MCF 10A (cell line): ENCODE measurements at regions of chr4 and their contacts with region 1.

Region 1: DNA sequence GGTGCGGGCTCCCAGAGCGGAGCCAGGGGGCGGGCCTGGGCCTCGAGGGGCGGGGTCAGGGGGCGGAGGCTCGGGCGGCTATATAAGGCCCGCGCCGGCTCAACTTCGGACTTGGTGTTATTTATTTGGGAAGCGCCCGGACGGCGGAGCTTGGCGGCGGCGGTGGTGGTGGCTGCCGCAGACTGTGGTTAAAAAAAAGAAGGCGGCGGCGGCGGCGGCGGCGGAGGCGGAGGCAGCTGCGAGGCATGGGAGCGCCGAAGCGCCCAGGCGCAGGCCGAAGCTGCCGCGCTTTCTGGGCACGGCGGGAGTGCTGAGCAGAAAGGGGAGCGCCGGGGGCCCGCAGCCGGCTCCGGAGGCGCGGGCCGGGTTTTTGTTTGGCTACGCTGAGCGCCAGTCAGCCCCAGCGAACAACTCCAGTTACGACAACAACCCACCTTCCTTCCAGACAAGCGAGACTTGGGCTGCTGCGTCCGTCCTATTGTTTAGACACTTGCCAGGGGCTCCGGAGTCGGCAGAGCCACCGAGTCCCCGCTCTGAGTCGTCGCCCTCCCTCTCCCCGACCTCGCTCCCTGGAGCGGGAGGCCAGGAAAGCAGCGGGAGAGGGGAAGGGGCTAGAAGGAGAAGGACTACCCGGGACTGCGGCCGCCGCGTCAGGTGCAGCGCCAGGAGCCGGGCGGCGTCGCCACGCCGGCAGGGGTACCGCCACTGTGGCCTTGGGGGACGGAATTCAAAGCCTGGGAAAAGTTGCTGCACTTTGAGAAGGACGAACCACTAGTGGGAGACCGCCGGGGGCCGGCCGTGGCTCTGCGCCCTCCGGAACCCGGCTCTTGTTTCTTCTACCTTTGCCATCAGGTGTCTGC is at the start of gene SLIT2:
- DNase-seq: peak; percentile 84
- H3K4me3 Mint-ChIP-seq: peak within 1 kb of the TSS; percentile 91
- H3K27ac Mint-ChIP-seq: peak within 1 kb of the TSS; percentile 63
- H3K4me1 Mint-ChIP-seq: peaks cover 29% of the 10 kb centered on the region
- H3K27me3 Mint-ChIP-seq: no peaks in the 10 kb centered on the region
- CTCF ChIP-seq: no peak
- total RNA-seq, gene SLIT2: 8.4 and 10.2 TPM in 2 replicates

Region 2: GRCh38 chr4:18689308-18690115 is 1562.5 kb before region 1 on chr4:
- CTCF ChIA-PET with region 1: interaction called, 5 read pairs
- POLR2A ChIA-PET with region 1: no interaction called
- intact Hi-C with region 1: loop called (anchors 2 kb)
- DNase-seq: peak; percentile 73
- H3K4me3 Mint-ChIP-seq: no peak overlapping the region
- H3K27ac Mint-ChIP-seq: no peak overlapping the region
- H3K4me1 Mint-ChIP-seq: peaks cover 10% of the 10 kb centered on the region
- H3K27me3 Mint-ChIP-seq: no peaks in the 10 kb centered on the region
- CTCF ChIP-seq: peak; percentile 80

Region 3: GRCh38 chr4:19300213-19300612 is 951.8 kb before region 1 on chr4:
- CTCF ChIA-PET with region 1: interaction called, 11 read pairs
- POLR2A ChIA-PET with region 1: no interaction called
- intact Hi-C with region 1: no loop called
- DNase-seq: no peak
- H3K4me3 Mint-ChIP-seq: no peak overlapping the region
- H3K27ac Mint-ChIP-seq: no peak overlapping the region
- H3K4me1 Mint-ChIP-seq: peaks cover 5% of the 10 kb centered on the region
- H3K27me3 Mint-ChIP-seq: no peaks in the 10 kb centered on the region
- CTCF ChIP-seq: no peak

Region 4: DNA sequence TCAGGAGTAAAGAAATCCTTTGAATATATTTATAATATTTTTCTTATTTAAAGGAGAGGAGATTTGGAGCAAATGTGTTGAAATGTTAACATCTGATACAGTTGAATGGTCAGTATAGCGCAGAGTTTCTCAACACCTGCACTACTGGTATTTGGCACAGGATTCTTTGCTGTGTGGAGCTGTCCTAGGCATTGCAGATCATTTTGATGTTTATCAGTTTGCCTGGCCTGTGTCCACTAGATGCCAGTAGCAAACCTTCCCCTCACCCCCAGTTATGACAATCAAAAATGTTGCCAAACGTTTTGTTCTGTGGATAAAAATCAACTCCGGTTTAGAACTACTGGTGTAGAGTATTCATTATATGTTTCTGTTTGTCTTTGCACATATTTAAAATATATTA is 765.6 kb before region 1 on chr4:
- CTCF ChIA-PET with region 1: interaction called, 10 read pairs
- POLR2A ChIA-PET with region 1: no interaction called
- intact Hi-C with region 1: loop called (anchors 1 kb)
- DNase-seq: peak; percentile 53
- H3K4me3 Mint-ChIP-seq: no peak overlapping the region
- H3K27ac Mint-ChIP-seq: no peak overlapping the region
- H3K4me1 Mint-ChIP-seq: no peaks in the 10 kb centered on the region
- H3K27me3 Mint-ChIP-seq: no peaks in the 10 kb centered on the region
- CTCF ChIP-seq: peak; percentile 25

Region 5: DNA sequence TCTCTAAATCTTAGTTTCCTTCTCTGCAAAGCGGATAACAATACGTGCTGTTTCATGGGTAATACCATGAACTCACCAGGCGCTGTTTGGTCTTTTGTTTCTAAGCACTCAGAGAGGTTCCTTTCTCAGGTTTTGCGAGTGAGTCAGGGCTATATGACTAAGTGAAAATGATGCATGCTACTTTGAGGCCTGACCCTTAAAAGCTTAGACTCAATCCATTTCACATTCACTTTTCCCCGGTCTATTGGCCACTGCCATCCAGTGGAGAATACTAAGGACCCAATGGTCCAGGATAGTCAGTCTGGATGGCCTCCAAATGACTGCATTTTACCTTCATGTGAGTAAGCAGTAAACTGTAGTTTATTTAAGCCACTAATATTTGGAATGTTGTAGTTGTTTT is 401.1 kb before region 1 on chr4:
- CTCF ChIA-PET with region 1: no interaction called
- POLR2A ChIA-PET with region 1: no interaction called
- intact Hi-C with region 1: loop called (anchors 1 kb)
- DNase-seq: peak; percentile 77
- H3K4me3 Mint-ChIP-seq: no peak overlapping the region
- H3K27ac Mint-ChIP-seq: peak overlapping the region; percentile 33
- H3K4me1 Mint-ChIP-seq: peaks cover 7% of the 10 kb centered on the region
- H3K27me3 Mint-ChIP-seq: no peaks in the 10 kb centered on the region
- CTCF ChIP-seq: no peak

Region 6: GRCh38 chr4:20266215-20267082 is 14.4 kb after region 1 on chr4:
- CTCF ChIA-PET with region 1: interaction called, 3 read pairs
- POLR2A ChIA-PET with region 1: interaction called, 12 read pairs
- intact Hi-C with region 1: no loop called
- DNase-seq: no peak
- H3K4me3 Mint-ChIP-seq: no peak overlapping the region
- H3K27ac Mint-ChIP-seq: no peak overlapping the region
- H3K4me1 Mint-ChIP-seq: no peaks in the 10 kb centered on the region
- H3K27me3 Mint-ChIP-seq: no peaks in the 10 kb centered on the region
- CTCF ChIP-seq: no peak